ENCODE measurements at regions of chr5 and their contacts with region 1.

Region 1: GRCh38 chr5:79448336-79448735 is 65.6 kb downstream of the HOMER1 start:
- DNase-seq: no peak
- ATAC-seq: no peak
- H3K4me3 Mint-ChIP-seq: no peak overlapping the region
- H3K27ac Mint-ChIP-seq: no peak overlapping the region
- H3K4me1 Mint-ChIP-seq: no peaks in the 10 kb centered on the region
- H3K27me3 Mint-ChIP-seq: no peaks in the 10 kb centered on the region

Region 2: GRCh38 chr5:79464695-79465332 is 16.5 kb after region 1 on chr5:
- CTCF ChIA-PET with region 1: interaction called, 16 read pairs
- POLR2A ChIA-PET with region 1: no interaction called
- intact Hi-C with region 1: no loop called
- DNase-seq: no peak
- ATAC-seq: peak; percentile 30
- H3K4me3 Mint-ChIP-seq: no peak overlapping the region
- H3K27ac Mint-ChIP-seq: no peak overlapping the region
- H3K4me1 Mint-ChIP-seq: no peaks in the 10 kb centered on the region
- H3K27me3 Mint-ChIP-seq: peaks cover 3% of the 10 kb centered on the region